ENCODE measurements at regions of chr1 and their contacts with region 1.

Region 1: DNA sequence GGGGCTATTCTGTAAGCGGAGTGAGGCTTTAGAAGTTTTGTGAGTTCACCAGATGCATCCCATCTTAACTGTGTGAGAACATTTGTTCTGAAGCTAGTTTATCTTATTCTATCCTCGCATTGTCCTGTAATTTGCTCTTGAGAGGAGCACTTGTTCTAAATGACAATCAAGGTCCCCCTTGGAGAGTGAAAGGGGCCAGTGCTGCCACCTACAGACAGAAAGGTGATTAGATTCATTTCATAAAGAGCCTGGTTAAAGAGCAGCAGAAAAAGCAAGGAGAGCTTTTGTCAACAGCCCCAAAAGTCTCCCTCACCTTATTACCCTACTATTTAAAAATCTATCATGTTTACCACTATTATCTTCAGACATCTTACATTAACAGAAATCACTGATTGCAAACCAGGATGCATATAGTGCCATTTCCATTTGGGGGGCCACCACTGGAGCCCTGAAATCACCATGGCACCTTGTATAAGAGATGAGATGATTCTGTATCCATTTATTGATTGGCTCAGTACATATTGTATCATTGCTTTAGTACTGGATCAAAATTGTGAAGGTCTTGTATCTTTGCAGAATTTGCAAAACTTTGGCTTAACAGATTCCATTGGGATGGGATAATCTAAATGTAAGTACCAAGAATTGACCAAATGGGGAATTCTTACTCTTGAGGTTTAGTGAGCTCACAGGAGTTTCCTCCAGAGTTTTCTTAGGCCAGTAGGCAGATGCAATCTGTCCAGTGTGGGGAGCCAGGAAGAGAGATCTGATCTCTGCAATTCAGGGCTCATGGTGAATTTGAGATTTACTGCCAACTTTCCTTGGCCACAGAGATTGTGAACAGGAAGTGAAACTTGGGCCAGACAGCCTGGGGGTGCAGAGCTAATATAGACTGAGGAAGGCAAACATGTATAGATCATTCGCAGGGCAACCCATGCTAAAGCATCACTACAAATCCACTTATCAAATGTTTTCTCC is 64.3 kb upstream of the TRABD2B start:
- DNase-seq: peak; percentile 78
- H3K4me3 Mint-ChIP-seq: no peak overlapping the region
- H3K27ac Mint-ChIP-seq: no peak overlapping the region
- H3K4me1 Mint-ChIP-seq: no peaks in the 10 kb centered on the region
- H3K27me3 Mint-ChIP-seq: no peaks in the 10 kb centered on the region
- CTCF ChIP-seq: peak; percentile 82

Region 2: DNA sequence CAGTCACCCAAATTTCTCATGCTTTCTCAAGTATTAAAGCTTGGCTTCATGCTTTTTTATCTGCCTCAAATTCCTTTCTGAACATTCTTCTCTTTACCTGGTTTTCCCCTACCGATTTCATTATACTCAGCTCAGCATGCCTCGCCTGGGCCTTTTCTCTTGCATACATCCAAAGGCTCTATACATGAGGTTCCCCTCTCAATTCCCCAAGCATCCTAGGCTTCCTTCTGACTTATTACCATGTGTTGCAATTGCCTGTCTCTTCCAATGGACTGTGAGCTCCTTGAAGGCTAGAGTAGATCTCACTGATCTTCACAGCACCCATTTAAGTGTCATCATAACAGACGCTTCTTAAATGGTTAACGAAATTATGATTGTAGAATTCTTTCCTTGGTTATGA is 948.3 kb before region 1 on chr1:
- CTCF ChIA-PET with region 1: no interaction called
- POLR2A ChIA-PET with region 1: no interaction called
- intact Hi-C with region 1: no loop called
- DNase-seq: no peak
- H3K4me3 Mint-ChIP-seq: no peak overlapping the region
- H3K27ac Mint-ChIP-seq: no peak overlapping the region
- H3K4me1 Mint-ChIP-seq: no peaks in the 10 kb centered on the region
- H3K27me3 Mint-ChIP-seq: no peaks in the 10 kb centered on the region
- CTCF ChIP-seq: no peak

Region 3: DNA sequence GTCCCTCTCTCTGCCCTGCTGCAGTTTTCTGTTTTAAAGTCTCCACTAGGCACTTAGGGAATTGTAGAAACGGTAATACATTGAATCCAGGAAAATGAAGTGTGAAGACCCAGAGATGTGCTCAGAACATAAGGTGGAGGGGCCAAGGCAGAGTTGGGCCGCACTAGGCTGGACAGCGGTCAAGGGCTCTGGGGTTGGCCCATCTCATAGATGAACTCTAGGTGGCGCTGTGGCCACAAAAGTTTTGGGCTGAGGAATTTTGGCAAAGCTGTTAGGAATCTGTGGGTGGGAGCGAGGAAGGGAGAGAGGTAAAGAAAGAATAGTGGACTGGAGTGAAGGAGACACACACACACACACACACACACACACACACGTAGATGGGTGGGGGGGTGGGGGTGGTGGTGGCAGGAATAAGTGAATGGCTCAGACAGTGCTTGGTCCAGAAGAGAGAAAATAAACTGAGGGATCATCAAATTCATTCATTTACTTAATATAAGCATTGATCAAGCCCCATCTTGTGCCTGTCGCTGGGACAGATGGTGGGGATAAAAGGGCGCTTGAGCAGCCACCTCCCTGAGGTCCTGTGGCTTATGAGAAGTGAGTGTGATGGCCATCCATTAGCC is 322.8 kb before region 1 on chr1:
- CTCF ChIA-PET with region 1: interaction called, 57 read pairs
- POLR2A ChIA-PET with region 1: no interaction called
- intact Hi-C with region 1: loop called (anchors 1 kb)
- DNase-seq: peak; percentile 73
- H3K4me3 Mint-ChIP-seq: no peak overlapping the region
- H3K27ac Mint-ChIP-seq: no peak overlapping the region
- H3K4me1 Mint-ChIP-seq: no peaks in the 10 kb centered on the region
- H3K27me3 Mint-ChIP-seq: peaks cover 25% of the 10 kb centered on the region
- CTCF ChIP-seq: peak; percentile 77

Region 4: DNA sequence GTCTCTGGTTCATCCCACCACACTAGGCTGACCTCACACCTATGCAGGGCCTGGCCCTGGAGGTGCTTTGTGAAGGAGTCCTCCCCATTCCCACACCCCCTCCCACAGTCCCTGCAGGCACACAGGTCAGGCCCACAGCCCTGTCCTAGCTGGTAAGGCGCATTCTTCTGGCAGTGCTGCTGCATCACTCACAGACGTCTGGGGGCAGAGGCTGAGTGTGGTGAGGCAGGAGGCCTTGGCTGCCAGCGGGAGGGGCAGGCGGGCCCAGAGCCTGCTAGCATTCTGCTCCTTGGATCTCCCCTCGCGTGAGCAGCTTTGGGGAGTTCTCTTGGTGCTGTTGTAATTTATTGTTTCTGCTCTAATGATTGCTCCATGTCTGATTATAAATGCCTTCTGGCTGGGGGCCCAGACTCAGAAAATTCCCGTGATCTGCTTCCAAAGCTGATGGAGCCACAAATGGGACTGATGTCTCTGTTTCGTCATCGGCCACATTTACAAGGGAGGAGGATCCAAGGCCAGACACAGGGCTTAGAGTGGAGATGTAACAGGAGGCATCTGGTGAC is 127.1 kb before region 1 on chr1:
- CTCF ChIA-PET with region 1: interaction called, 9 read pairs
- POLR2A ChIA-PET with region 1: no interaction called
- intact Hi-C with region 1: loop called (anchors 5 kb)
- DNase-seq: peak; percentile 84
- H3K4me3 Mint-ChIP-seq: no peak overlapping the region
- H3K27ac Mint-ChIP-seq: no peak overlapping the region
- H3K4me1 Mint-ChIP-seq: peaks cover 49% of the 10 kb centered on the region
- H3K27me3 Mint-ChIP-seq: no peaks in the 10 kb centered on the region
- CTCF ChIP-seq: no peak

Region 5: GRCh38 chr1:48007044-48007443 is 54.4 kb before region 1 on chr1:
- CTCF ChIA-PET with region 1: interaction called, 141 read pairs
- POLR2A ChIA-PET with region 1: interaction called, 5 read pairs
- intact Hi-C with region 1: no loop called
- DNase-seq: peak; percentile 79
- H3K4me3 Mint-ChIP-seq: no peak overlapping the region
- H3K27ac Mint-ChIP-seq: no peak overlapping the region
- H3K4me1 Mint-ChIP-seq: peaks cover 9% of the 10 kb centered on the region
- H3K27me3 Mint-ChIP-seq: no peaks in the 10 kb centered on the region
- CTCF ChIP-seq: no peak

Region 6: DNA sequence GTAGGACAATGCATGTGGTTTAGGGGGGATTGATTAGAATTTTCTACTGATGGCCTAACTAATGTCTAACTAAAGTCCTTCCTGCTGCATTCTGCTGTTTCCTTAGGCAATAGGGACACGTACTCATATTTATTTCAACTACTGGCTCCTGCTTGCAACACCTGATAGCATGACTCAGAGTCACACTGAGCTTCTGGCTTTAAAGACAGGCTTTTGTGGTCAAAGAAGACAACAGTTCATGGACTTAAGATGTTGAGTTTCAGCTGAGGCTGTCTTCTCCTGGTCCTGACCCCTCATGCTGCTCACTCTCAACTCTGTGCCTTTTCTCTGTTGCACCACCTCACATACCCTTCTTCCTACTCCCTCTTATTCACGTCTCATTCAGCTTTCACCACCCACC is 35.2 kb before region 1 on chr1:
- CTCF ChIA-PET with region 1: interaction called, 32 read pairs
- POLR2A ChIA-PET with region 1: interaction called, 3 read pairs
- intact Hi-C with region 1: no loop called
- DNase-seq: peak; percentile 86
- H3K4me3 Mint-ChIP-seq: no peak overlapping the region
- H3K27ac Mint-ChIP-seq: peak overlapping the region; percentile 99
- H3K4me1 Mint-ChIP-seq: peaks cover 42% of the 10 kb centered on the region
- H3K27me3 Mint-ChIP-seq: no peaks in the 10 kb centered on the region
- CTCF ChIP-seq: no peak

Region 7: GRCh38 chr1:48048064-48048463 is 13.4 kb before region 1 on chr1:
- CTCF ChIA-PET with region 1: interaction called, 70 read pairs
- POLR2A ChIA-PET with region 1: interaction called, 5 read pairs
- intact Hi-C with region 1: no loop called
- DNase-seq: peak; percentile 49
- H3K4me3 Mint-ChIP-seq: no peak overlapping the region
- H3K27ac Mint-ChIP-seq: no peak overlapping the region
- H3K4me1 Mint-ChIP-seq: peaks cover 40% of the 10 kb centered on the region
- H3K27me3 Mint-ChIP-seq: no peaks in the 10 kb centered on the region
- CTCF ChIP-seq: no peak

Measured in MCF 10A (cell line).